ENCODE measurements at regions of chr10 and their contacts with region 1.

Region 1: DNA sequence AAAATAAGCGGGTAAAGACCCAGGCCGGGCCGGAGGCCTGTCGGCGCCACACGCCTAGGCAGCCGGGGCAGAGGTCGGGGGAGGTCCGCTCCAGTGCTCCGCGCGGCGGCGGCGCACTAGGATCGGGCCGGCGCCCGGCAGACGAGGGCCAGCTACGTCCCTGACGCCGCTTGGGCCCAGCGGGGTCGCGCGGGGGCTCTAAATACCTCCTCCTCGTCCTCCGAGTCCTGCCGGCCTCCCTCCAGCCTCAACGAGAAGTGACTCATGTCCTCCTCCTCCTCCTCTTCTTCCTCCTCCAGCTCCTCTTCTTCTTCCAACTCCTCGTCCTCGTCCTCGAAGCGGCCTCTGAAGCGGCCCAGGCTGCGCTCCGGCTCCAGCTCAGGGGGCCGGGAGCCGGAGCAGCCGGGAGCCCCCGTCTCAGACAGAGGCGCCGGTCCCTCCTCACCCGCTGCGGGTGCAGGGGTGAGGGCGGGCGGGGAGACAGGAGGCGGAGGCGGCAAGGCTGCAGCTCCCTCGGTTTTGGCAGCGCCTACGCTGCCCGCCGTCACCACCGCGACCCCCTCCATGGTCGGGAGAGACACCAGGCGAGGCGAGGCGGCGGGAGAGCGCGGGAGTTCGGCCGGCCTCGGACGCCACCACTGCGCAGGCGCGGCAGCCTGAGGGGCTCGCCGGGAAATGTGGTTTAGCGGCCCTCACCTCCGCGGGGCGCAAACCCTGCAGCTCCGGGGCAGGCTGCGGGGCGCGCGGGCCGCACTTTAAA is at the start of gene PCGF6:
- DNase-seq: peak; percentile 64
- ATAC-seq: peak; percentile 98
- H3K4me3 ChIP-seq: peak within 1 kb of the TSS; percentile 98
- H3K27ac ChIP-seq: peak within 1 kb of the TSS; percentile 95
- H3K4me1 ChIP-seq: no peaks in the 10 kb centered on the region
- H3K27me3 ChIP-seq: no peaks in the 10 kb centered on the region
- CTCF ChIP-seq: no peak
- POLR2A ChIP-seq: no peak
- RAD21 ChIP-seq: no peak
- total RNA-seq, gene PCGF6: 6.5 and 10.0 TPM in 2 replicates

Region 2: DNA sequence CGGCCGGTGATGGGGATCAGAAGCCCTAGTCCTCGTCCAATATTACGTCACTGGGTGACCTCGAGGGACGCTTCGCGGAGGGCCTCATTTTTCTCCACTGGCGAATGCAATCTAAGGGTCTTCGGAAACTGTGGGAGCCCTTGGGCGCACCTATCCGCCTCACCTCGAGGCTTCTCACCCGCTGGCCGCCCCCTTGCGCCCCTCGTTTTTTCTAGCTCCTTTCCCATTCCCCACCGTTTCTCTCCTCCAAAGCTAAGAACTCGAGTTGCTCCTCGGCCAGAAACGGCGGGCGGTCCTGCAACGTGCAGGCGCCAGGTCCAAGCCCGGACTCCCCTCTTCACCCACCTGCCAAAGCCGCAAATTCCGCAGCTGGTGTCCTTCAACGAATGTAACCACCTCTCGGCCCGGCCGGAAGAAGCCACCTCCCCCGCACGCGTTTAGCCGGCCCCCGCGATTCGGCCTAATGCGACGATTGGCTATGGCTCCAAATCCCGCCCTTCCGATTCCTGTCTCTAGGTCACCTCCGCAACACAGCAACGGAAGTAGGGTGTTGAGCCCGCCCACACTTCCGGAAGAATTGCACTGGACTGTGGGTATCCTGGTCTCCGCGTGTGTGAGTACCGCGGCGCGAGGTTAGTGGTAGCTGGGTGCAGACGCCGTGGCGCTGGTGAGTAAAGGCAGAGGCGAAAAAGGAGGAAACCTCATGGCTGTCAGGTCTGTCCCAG is 45.5 kb after region 1 on chr10 and contains the starts of genes ATP5MK and PDCD11:
- CTCF ChIA-PET with region 1: no interaction called
- POLR2A ChIA-PET with region 1: no interaction called
- dilution Hi-C with region 1: no loop called
- in situ Hi-C with region 1: no loop called
- intact Hi-C with region 1: loop called (anchors 1 kb)
- DNase-seq: peak; percentile 98
- ATAC-seq: peak; percentile 99
- H3K4me3 ChIP-seq: peak within 1 kb of the TSS; percentile 95
- H3K27ac ChIP-seq: peak within 1 kb of the TSS; percentile 82
- H3K4me1 ChIP-seq: peaks cover 8% of the 10 kb centered on the region
- H3K27me3 ChIP-seq: no peaks in the 10 kb centered on the region
- CTCF ChIP-seq: peak; percentile 36
- POLR2A ChIP-seq: peak; percentile 90
- RAD21 ChIP-seq: no peak
- total RNA-seq, gene ATP5MK: 101 and 128 TPM in 2 replicates
- total RNA-seq, gene PDCD11: 49.7 and 56.8 TPM in 2 replicates

Region 3: DNA sequence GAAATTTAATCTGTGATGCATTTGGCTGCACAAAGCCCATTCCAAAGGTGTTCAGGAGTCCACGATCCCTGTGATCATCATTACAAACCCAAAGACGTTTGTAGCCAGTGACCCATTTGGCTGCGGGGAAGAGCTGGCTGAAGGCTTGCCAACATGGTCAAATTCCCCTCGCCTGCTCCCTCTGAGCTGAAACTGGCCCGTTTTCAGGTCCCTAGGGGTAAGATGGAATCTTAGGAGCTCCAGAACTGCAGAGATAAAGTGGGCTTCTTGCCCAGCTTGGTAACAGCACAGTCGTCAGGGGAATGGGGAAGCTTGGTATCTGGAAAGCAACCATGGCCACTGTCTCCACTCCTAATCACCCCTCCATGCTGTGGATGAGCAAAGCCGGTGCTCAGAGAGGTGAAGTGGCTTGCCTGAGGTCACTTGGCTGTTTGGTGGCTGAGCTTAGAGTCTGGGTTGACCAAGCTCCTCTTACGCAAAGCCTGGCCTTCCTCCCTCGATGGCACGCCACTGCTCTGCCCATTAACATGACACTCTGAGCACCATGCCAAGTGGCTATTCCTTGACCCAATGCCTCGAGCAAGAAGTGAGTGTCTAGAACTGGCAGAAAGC is 298.3 kb after region 1 on chr10:
- CTCF ChIA-PET with region 1: no interaction called
- POLR2A ChIA-PET with region 1: no interaction called
- dilution Hi-C with region 1: no loop called
- in situ Hi-C with region 1: no loop called
- intact Hi-C with region 1: no loop called
- DNase-seq: peak; percentile 16
- ATAC-seq: no peak
- H3K4me3 ChIP-seq: no peak overlapping the region
- H3K27ac ChIP-seq: no peak overlapping the region
- H3K4me1 ChIP-seq: peaks cover 38% of the 10 kb centered on the region
- H3K27me3 ChIP-seq: no peaks in the 10 kb centered on the region
- CTCF ChIP-seq: no peak
- POLR2A ChIP-seq: no peak
- RAD21 ChIP-seq: no peak